Caco-2 (cell line): ENCODE measurements at regions of chr17 and their contacts with region 1.

Region 1: DNA sequence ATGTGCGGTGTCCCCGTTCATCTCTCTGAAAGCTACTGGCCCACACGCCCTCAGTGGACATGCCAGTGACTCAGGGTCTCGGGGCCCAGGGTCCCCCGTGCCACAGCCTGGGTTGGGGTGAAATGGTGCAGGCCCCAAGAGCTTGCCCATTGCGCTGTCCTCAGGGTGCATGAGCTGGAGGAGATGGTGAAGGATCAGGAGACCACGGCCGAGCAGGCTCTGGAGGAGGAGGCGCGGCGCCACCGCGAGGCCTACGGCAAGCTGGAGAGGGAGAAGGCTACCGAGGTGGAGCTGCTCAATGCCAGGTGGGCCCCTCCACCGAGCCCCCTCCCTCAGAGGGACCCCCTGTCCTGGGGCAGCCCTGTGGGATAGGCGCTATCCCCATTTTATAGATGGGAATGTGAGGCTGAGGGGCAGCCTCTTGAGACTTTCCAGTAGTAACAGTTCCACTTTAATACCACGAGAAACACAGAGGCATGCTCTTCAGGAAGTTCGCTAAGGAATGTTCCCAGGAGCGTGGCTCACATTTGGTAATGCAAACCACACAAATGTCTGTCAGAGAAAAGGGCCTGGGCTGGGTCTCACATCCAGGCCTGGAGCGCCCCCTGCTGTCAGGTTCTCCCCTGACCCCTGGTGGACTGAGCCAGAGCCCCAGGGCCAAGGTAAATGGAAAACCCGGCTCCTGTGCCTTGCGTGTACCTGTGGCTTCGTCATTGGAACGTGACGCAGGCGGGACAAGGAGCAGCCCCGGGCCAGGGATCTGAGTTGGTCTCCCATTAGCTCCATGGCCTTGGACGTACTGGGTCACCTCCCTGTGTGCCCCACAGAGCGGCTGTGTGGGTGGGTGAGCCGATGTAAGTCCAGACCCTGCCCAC is 133.7 kb downstream of the RAB11FIP4 start:
- DNase-seq: peak; percentile 85 to 92
- H3K4me3 ChIP-seq: no peak overlapping the region
- H3K4me3 Mint-ChIP-seq: no peak overlapping the region
- H3K27ac Mint-ChIP-seq: no peak overlapping the region
- H3K4me1 ChIP-seq: no peaks in the 10 kb centered on the region
- H3K4me1 Mint-ChIP-seq: no peaks in the 10 kb centered on the region
- H3K27me3 ChIP-seq: no peaks in the 10 kb centered on the region
- H3K27me3 Mint-ChIP-seq: no peaks in the 10 kb centered on the region
- CTCF ChIP-seq: peak; percentile 95 to 97

Region 2: GRCh38 chr17:31388770-31389661 is 136.1 kb before region 1 on chr17:
- CTCF ChIA-PET with region 1: interaction called, 3 read pairs
- POLR2A ChIA-PET with region 1: no interaction called
- intact Hi-C with region 1: loop called (anchors 1 kb)
- DNase-seq: peak in 1 of 2 experiments; percentile 63
- H3K4me3 ChIP-seq: no peak overlapping the region
- H3K4me3 Mint-ChIP-seq: no peak overlapping the region
- H3K27ac Mint-ChIP-seq: no peak overlapping the region
- H3K4me1 ChIP-seq: no peaks in the 10 kb centered on the region
- H3K4me1 Mint-ChIP-seq: no peaks in the 10 kb centered on the region
- H3K27me3 ChIP-seq: peaks cover 2% of the 10 kb centered on the region
- H3K27me3 Mint-ChIP-seq: peaks cover 12% of the 10 kb centered on the region
- CTCF ChIP-seq: peak; percentile 87 to 93

Region 3: DNA sequence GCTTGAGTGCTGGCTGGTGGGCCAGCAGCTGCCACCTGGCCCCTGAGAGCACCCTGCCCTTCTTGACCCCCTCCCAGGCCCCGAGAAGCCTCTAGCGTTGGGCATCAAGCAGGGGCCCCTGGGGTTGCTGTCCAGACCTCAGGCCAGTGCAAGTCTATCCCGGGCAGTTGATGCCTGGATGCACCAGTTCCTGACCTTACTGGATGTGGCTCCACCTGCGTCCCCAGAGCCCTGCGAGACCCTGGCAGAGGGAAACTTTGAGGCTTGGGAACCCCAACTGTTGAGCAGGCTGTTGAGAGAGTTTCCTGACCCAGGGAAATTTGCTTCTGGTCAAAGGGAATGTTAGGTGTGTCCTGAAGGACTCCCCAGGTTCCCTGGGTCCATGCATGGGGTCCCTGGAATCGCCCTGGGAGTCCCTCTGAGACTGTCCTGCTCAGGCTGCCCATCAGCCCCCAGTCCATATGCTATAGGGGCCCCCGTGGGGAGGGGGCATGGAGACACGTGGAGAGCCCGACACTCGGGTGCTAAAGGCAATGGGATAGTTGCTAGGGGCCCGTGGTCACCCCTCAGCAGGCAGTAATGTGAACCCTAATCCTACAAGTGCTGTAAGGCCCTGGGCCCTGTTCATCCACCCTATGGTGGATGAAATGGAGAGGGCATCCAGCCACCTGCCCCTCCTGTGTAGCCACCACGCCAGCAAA is 87.3 kb before region 1 on chr17:
- CTCF ChIA-PET with region 1: interaction called, 11 read pairs
- POLR2A ChIA-PET with region 1: no interaction called
- intact Hi-C with region 1: loop called (anchors 1 kb)
- DNase-seq: no peak
- H3K4me3 ChIP-seq: no peak overlapping the region
- H3K4me3 Mint-ChIP-seq: no peak overlapping the region
- H3K27ac Mint-ChIP-seq: no peak overlapping the region
- H3K4me1 ChIP-seq: 0 out of 2 replicates have a peak, but pooled peaks cover 6% of the 10 kb centered on the region
- H3K4me1 Mint-ChIP-seq: no peaks in the 10 kb centered on the region
- H3K27me3 ChIP-seq: no peaks in the 10 kb centered on the region
- H3K27me3 Mint-ChIP-seq: no peaks in the 10 kb centered on the region
- CTCF ChIP-seq: no peak

Region 4: DNA sequence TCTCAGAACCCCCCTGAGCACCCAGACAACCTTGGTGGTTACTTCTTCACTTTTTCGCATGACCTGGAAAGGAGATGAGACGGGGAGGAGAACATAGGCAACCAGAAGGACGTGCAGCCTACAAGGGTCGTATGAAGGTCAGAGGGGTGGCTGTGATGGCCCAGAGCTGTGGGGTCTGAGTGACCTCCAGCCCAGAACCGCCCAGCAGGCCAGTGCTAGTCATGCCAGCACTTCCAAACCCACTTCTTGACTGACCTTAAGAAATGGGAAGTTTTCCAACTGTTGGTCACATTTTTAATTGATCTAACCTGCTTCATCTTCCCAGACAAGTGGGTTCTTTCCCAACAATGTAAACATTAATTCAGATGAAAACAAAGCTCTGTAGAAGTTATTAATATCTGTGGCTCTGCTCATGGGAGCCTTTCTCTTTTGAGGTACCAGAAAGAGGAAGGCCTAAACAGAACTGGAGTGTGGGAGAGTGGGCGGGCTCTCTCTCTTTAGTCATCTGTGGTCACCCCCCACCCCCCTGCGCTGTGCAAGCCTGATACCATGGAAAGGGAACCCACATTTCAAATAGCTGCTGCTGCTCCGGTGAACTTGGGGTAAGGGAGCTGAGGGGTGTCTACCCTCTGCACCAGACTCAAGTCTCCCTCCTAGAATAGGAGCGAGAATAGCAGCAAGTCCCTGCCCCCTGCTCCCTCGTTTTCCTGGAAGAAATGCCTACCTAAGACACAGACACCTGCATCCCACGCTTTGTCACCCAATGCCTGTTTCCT is 32.1 kb before region 1 on chr17:
- CTCF ChIA-PET with region 1: interaction called, 11 read pairs
- POLR2A ChIA-PET with region 1: no interaction called
- intact Hi-C with region 1: no loop called
- DNase-seq: no peak
- H3K4me3 ChIP-seq: no peak overlapping the region
- H3K4me3 Mint-ChIP-seq: no peak overlapping the region
- H3K27ac Mint-ChIP-seq: peak overlapping the region; percentile 41
- H3K4me1 ChIP-seq: peaks cover 73% of the 10 kb centered on the region
- H3K4me1 Mint-ChIP-seq: peaks cover 52% of the 10 kb centered on the region
- H3K27me3 ChIP-seq: no peaks in the 10 kb centered on the region
- H3K27me3 Mint-ChIP-seq: no peaks in the 10 kb centered on the region
- CTCF ChIP-seq: no peak

Region 5: DNA sequence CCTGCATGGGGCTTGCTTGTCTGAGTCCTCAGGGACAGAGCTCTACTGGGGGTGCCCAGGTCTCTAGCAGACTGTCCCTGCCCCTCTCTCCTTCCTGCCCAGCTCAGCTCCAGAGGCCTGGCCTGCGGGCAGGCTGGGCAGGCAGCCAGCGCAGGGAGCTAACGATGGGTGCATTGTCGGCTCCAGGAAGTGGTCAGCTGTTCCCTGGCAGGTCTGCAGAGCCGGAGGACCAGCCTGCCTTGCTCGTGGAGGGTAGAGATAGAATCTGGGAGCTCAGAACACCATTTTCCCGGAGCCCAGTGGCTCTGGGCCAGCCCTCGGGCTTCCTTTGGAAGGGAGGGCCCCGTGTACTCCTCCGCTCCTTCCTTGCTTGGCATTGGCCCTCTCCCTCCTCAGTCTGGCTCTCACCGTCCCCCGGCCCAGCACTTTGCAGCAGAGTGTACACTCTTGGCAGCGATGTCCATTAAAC is 55.9 kb after region 1 on chr17:
- CTCF ChIA-PET with region 1: no interaction called
- POLR2A ChIA-PET with region 1: no interaction called
- intact Hi-C with region 1: loop called (anchors 10 kb)
- DNase-seq: no peak
- H3K4me3 ChIP-seq: no peak overlapping the region
- H3K4me3 Mint-ChIP-seq: no peak overlapping the region
- H3K27ac Mint-ChIP-seq: no peak overlapping the region
- H3K4me1 ChIP-seq: no peaks in the 10 kb centered on the region
- H3K4me1 Mint-ChIP-seq: no peaks in the 10 kb centered on the region
- H3K27me3 ChIP-seq: no peaks in the 10 kb centered on the region
- H3K27me3 Mint-ChIP-seq: no peaks in the 10 kb centered on the region
- CTCF ChIP-seq: no peak